GM12878 (cell line): ENCODE measurements at regions of chr1 and their contacts with region 1.

Region 1: GRCh38 chr1:14516974-14517840 is 81.3 kb upstream of the KAZN start:
- DNase-seq: peak; percentile 69
- ATAC-seq: peak; percentile 74
- H3K4me3 ChIP-seq: no peak overlapping the region
- H3K27ac ChIP-seq: peak overlapping the region; percentile 64
- H3K4me1 ChIP-seq: peaks cover 46% of the 10 kb centered on the region
- H3K27me3 ChIP-seq: no peaks in the 10 kb centered on the region
- CTCF ChIP-seq: no peak
- EP300 ChIP-seq: peak in 1 of 2 experiments; percentile 78; a peak in 1 of 4 replicates
- POLR2A ChIP-seq: no peak
- RAD21 ChIP-seq: no peak

Region 2: DNA sequence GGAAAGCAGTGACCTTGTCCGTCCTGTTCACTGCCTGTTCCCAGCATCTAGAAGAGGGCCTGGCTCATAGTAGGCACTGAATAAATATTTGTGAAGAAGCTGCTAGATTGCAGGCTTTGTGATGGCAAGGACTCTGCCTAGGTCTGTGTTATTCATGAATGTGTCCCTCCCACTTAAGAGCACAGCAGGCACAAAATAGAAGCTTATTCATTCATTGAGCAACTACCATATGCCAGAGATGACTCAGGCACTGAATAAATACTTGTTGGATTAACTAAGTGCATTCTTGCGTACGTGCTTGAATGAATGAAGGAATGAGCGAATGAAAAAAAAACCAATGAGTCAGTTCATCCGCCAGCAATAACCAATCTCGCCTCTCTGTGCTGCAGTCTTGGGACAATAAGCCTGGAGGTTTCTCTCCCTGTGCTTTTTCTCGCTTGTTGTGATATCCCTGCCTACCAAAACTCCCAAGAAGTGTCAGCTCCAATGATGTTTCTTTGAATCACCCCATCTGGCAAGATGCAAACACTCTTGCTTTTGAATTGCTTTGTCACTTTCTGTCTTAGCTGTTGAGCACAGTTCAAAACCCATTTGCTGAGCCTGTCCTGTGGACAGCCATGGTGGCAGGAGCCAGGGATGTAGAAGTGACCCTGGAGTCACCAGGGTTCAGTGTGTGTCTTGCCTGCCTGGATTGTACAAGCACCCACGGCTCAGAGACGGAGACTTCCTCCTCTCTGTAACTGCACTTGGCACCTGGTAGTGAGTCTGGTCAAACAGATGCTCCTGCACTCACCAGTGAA is 225.2 kb after region 1 on chr1:
- CTCF ChIA-PET with region 1: no interaction called
- POLR2A ChIA-PET with region 1: no interaction called
- RAD21 ChIA-PET with region 1: interaction called, 3 read pairs
- SMC1A ChIA-PET with region 1: interaction called, 4 read pairs
- in situ Hi-C with region 1: no loop called
- intact Hi-C with region 1: loop called (anchors 5 kb)
- DNase-seq: no peak
- ATAC-seq: peak; percentile 69
- H3K4me3 ChIP-seq: no peak overlapping the region
- H3K27ac ChIP-seq: no peak overlapping the region
- H3K4me1 ChIP-seq: peaks cover 13% of the 10 kb centered on the region
- H3K27me3 ChIP-seq: no peaks in the 10 kb centered on the region
- CTCF ChIP-seq: no peak
- EP300 ChIP-seq: peak in 1 of 2 experiments; percentile 58; a peak in 1 of 4 replicates
- POLR2A ChIP-seq: no peak
- RAD21 ChIP-seq: no peak